ENCODE measurements at regions of chr14 and their contacts with region 1.

Region 1: GRCh38 chr14:63543000-63543825 is at the start of gene PPP2R5E:
- DNase-seq: peak; percentile 96
- ATAC-seq: peak; percentile 97
- H3K4me3 ChIP-seq: peak within 1 kb of the TSS; percentile 89
- H3K27ac ChIP-seq: peak within 1 kb of the TSS; percentile 82
- H3K4me1 ChIP-seq: peaks cover 7 to 13% of the 10 kb centered on the region in 2 experiments; a peak in 3 of 5 replicates
- H3K27me3 ChIP-seq: no peaks in the 10 kb centered on the region
- CTCF ChIP-seq: no peak
- EP300 ChIP-seq: no peak
- POLR2A ChIP-seq: peak; percentile 89
- RAD21 ChIP-seq: no peak
- polyA plus RNA-seq, gene PPP2R5E: 4.2 to 6.2 TPM

Region 2: DNA sequence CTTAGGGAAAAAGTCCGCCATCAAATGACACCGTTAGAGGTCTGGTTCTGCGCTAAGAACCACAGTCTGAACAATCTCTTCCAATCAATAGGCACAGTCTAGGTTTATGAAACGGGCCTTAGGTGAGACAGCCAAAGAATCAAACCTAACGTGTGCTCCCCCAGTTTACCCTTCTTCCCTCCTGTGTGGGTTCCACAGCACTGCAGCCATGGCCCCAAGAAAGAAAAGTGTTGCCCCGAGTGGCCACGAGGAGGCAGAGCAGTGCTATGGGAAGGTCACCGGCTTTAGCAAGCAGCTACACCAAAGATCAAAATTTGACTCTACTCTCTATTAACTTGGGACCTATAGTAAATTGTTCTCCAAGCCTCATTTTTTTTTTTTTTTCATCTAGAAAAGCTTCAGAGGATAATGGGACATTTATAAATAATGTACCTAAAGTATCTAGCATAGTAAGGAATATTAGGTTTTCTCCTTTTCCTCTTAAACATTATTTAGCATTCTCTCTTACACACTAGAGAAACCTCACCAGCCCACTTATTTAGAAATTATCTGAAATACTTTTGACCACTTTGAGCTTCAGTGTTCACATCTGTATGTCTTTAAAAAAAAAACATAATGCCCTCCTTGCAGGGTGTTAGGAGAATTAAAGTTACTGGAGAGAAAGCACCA is 154.3 kb before region 1 on chr14:
- CTCF ChIA-PET with region 1: interaction called, 7 read pairs
- POLR2A ChIA-PET with region 1: no interaction called
- in situ Hi-C with region 1: no loop called
- intact Hi-C with region 1: loop called (anchors 1 kb)
- DNase-seq: peak; percentile 23 to 55 (median 36)
- ATAC-seq: peak; percentile 94
- H3K4me3 ChIP-seq: no peak overlapping the region
- H3K27ac ChIP-seq: no peak overlapping the region
- H3K4me1 ChIP-seq: no peaks in the 10 kb centered on the region
- H3K27me3 ChIP-seq: no peaks in the 10 kb centered on the region
- CTCF ChIP-seq: peak; percentile 63 to 79 (median 74)
- EP300 ChIP-seq: no peak
- POLR2A ChIP-seq: no peak
- RAD21 ChIP-seq: peak; percentile 57 to 77

Region 3: DNA sequence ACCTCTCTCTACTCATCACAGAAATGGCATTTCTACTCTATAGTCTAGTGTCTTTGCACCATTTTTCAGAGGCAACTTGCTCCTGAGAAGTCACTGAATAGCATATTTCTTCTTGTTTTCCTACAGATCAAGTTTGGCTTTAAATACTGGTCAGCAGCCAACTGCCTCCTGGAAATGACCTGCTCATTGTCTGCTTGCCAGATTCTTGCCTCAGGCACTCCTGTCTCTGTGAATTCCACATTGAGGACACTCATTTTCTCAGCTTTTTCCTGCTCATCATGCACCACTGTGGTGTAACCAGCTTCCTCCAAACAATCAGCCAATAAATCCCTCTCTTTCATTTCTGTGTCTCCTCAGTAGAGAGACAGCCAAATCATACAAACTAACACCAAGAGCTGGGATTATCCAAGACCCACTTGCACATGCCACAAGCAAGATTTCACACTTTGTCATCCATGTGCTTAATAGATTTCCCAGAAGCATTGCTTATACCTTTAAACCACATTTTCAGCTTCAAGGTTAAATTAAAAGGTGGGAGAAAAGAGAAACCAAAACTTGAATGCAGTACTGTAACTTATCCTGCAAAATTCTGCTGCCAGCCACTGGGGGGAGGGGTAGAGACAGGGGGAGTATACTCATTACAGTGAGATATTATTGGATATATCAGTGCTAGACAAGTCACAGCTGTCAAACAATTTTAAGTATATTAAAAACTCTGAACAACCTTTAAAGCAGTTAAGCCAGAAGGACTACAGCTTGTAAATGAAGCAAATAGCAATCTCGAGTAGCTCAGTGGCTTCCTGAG is 105.1 kb before region 1 on chr14:
- CTCF ChIA-PET with region 1: no interaction called
- POLR2A ChIA-PET with region 1: no interaction called
- in situ Hi-C with region 1: no loop called
- intact Hi-C with region 1: loop called (anchors 5 kb)
- DNase-seq: peak; percentile 14 to 32 (median 14)
- ATAC-seq: peak; percentile 86
- H3K4me3 ChIP-seq: no peak overlapping the region
- H3K27ac ChIP-seq: no peak overlapping the region
- H3K4me1 ChIP-seq: peaks cover 0 to 12% of the 10 kb centered on the region in 2 experiments; a peak in 4 of 5 replicates
- H3K27me3 ChIP-seq: no peaks in the 10 kb centered on the region
- CTCF ChIP-seq: peak in 2 of 3 experiments; percentile 37 to 47; a peak in 4 of 6 replicates
- EP300 ChIP-seq: no peak
- POLR2A ChIP-seq: no peak
- RAD21 ChIP-seq: peak; percentile 6 to 33; a peak in 1 of 4 replicates

Measured in K562 (cell line).